Activated naive CD4-positive, alpha-beta T cell treated with anti-CD3 and anti-CD28 coated beads, Interleukin-2, amount 10 ng/mL, durations not matched to agents 7 days and 5 days (primary cell): ENCODE measurements at regions of chr14 and their contacts with region 1.

Region 1: DNA sequence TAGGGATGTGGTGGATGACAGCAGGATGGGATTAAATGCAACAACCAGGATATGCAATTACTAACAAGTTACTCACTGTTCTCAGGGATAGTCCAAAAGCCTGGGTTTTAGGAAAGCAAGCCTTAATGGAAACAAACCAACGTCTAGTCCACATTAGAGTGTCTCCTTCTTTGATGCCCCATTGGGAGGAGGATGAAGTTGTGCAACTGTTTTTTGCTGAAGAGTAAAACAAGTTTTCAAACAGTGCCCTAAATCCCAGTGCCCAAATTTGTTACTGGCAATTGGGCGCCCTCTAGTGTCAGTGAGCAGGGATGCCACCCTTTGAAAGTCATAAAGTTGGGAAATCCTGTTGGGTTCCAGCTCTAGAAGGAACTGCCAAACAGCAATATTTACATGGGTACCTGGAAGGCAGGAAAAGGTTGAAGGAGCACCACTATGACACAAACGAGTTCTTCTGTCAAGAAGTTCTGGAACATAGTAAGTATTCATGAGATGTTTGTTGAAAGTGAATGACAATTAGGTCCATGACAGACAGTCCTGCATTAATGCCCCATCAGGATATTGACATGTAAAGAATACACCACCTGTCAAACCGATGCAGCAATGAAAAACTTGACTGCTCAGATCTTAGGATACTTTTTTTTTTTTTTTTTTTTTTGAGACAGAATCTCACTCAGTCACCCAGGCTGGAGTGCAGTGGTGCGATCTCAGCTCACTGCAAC is 11.1 kb upstream of the DPF3 start:
- DNase-seq: peak; percentile 75
- H3K4me3 Mint-ChIP-seq: no peak overlapping the region
- H3K27ac Mint-ChIP-seq: no peak overlapping the region
- H3K4me1 Mint-ChIP-seq: peaks cover 19% of the 10 kb centered on the region
- H3K27me3 Mint-ChIP-seq: peaks cover 54% of the 10 kb centered on the region

Region 2: DNA sequence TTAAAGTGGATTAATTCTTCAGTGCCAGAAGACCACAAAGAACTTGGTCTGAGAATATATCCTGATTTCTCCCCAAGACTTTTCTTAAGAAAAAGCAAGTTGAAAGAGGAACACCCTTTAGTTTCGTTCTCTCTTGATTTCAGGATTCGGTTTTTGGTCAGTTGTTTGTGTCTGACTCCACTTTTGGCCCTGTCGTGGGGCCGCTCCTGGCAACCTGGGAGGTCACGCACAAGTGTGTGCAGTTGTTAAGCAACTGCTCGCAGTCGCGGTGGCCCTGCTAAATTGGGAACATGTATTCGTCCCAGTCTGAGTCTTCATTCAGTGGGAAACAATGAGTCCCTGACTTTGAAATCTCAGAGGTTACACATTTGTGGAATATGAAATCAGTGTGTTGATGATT is 904.1 kb before region 1 on chr14:
- CTCF ChIA-PET with region 1: no interaction called
- DNase-seq: no peak
- H3K4me3 Mint-ChIP-seq: no peak overlapping the region
- H3K27ac Mint-ChIP-seq: no peak overlapping the region
- H3K4me1 Mint-ChIP-seq: no peaks in the 10 kb centered on the region
- H3K27me3 Mint-ChIP-seq: no peaks in the 10 kb centered on the region

Region 3: GRCh38 chr14:72893636-72894321 is 11.2 kb before region 1 on chr14 and contains the start of gene DPF3:
- CTCF ChIA-PET with region 1: interaction called, 11 read pairs
- DNase-seq: peak; percentile 97
- H3K4me3 Mint-ChIP-seq: peak within 1 kb of the TSS; percentile 87
- H3K27ac Mint-ChIP-seq: peak within 1 kb of the TSS; percentile 78
- H3K4me1 Mint-ChIP-seq: peaks cover 26% of the 10 kb centered on the region
- H3K27me3 Mint-ChIP-seq: peaks cover 85% of the 10 kb centered on the region

Region 4: GRCh38 chr14:72948481-72949138 is 43.6 kb after region 1 on chr14:
- CTCF ChIA-PET with region 1: interaction called, 11 read pairs
- DNase-seq: peak; percentile 82
- H3K4me3 Mint-ChIP-seq: no peak overlapping the region
- H3K27ac Mint-ChIP-seq: peak overlapping the region; percentile 22
- H3K4me1 Mint-ChIP-seq: peaks cover 5% of the 10 kb centered on the region
- H3K27me3 Mint-ChIP-seq: no peaks in the 10 kb centered on the region